GM12878 (cell line): ENCODE measurements at regions of chr1 and their contacts with region 1.

Region 1: GRCh38 chr1:198701766-198702539 is 63.1 kb downstream of the PTPRC start:
- DNase-seq: no peak
- ATAC-seq: peak; percentile 32; the same call in 2 of the 3 replicates
- H3K4me3 ChIP-seq: no peak overlapping the region
- H3K27ac ChIP-seq: no peak overlapping the region
- H3K4me1 ChIP-seq: no peaks in the 10 kb centered on the region
- H3K27me3 ChIP-seq: no peaks in the 10 kb centered on the region
- CTCF ChIP-seq: no peak
- EP300 ChIP-seq: no peak
- POLR2A ChIP-seq: no peak
- RAD21 ChIP-seq: no peak

Region 2: GRCh38 chr1:198246337-198246736 is 455.6 kb before region 1 on chr1:
- CTCF ChIA-PET with region 1: no interaction called
- POLR2A ChIA-PET with region 1: no interaction called
- RAD21 ChIA-PET with region 1: no interaction called
- SMC1A ChIA-PET with region 1: no interaction called
- in situ Hi-C with region 1: no loop called
- intact Hi-C with region 1: no loop called
- DNase-seq: no peak
- ATAC-seq: no peak
- H3K4me3 ChIP-seq: no peak overlapping the region
- H3K27ac ChIP-seq: no peak overlapping the region
- H3K4me1 ChIP-seq: no peaks in the 10 kb centered on the region
- H3K27me3 ChIP-seq: no peaks in the 10 kb centered on the region
- CTCF ChIP-seq: no peak
- EP300 ChIP-seq: no peak
- POLR2A ChIP-seq: no peak
- RAD21 ChIP-seq: no peak

Region 3: DNA sequence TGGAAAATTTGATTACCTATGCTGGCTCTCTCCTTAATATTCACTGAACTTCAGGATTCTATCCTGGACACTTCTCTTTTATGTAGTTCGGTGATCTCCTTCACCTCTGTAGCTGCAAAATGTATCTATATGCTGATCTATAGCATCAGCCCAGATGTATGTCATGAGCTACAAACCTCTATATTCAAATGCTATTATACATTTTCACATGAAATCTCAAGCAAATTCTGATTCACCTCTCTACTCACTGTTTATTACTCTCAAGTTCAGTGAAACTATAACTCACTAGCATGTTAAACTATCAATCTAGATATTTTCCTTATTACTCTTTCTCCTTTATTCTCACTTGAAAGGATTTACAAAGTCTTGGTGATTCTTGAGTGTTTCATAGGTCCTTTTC is 10.9 kb before region 1 on chr1:
- CTCF ChIA-PET with region 1: interaction called, 9 read pairs
- POLR2A ChIA-PET with region 1: no interaction called
- RAD21 ChIA-PET with region 1: no interaction called
- SMC1A ChIA-PET with region 1: interaction called, 19 read pairs
- in situ Hi-C with region 1: no loop called
- intact Hi-C with region 1: no loop called
- DNase-seq: no peak
- ATAC-seq: no peak; the same call in 2 of the 3 replicates
- H3K4me3 ChIP-seq: no peak overlapping the region
- H3K27ac ChIP-seq: no peak overlapping the region
- H3K4me1 ChIP-seq: peaks cover 3% of the 10 kb centered on the region; the same call in 1 of the 2 replicates
- H3K27me3 ChIP-seq: no peaks in the 10 kb centered on the region
- CTCF ChIP-seq: no peak
- EP300 ChIP-seq: no peak
- POLR2A ChIP-seq: no peak
- RAD21 ChIP-seq: no peak